ENCODE measurements at regions of chr13 and their contacts with region 1.

Region 1: GRCh38 chr13:112942689-112943308 is 26.2 kb upstream of the MCF2L start:
- DNase-seq: peak; percentile 98
- ATAC-seq: peak; percentile 98
- H3K4me3 Mint-ChIP-seq: peak overlapping the region; percentile 73
- H3K27ac Mint-ChIP-seq: peak overlapping the region; percentile 28
- H3K4me1 Mint-ChIP-seq: peaks cover 7% of the 10 kb centered on the region
- H3K27me3 Mint-ChIP-seq: peaks cover 18% of the 10 kb centered on the region

Region 2: DNA sequence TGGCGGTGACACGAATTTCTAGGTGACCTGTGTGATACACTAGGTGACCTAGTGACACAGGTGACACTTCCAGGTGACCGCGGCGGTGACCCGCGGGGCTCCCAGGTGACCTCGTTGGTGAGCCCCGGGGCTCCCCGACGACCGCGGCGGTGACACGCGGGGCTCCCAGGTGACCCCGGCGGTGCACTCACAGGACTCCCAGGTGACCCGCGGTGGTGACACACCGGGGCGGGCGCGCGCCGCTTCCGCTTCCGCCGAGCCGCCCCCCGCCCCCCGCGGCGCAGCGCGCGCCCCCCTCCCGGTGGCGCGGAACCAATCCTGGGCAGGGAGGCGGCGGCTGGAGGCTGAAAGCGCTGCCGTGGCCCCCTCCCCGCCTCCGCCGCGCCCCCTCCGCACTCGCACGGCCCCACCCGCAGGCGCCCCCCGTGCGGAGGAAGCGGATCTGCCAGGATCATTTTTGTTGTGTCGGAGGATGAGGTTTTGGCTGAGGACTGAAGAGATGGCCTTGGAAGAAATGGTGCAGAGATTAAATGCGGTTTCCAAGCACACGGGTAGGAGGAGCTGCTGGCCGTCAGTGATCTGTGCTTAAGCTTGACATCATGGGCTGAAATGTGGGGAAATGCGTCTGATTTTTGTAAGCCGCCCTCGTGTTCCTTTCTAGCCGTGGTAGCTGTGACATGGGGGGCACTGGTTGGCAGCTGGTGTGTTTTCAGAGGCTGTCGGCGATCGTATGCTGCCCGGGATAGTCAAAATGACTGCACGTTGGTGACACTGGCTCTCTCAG is 26.3 kb after region 1 on chr13 and contains the start of gene MCF2L:
- CTCF ChIA-PET with region 1: interaction called, 6 read pairs
- POLR2A ChIA-PET with region 1: no interaction called
- intact Hi-C with region 1: loop called (anchors 1 to 2 kb)
- DNase-seq: peak; percentile 82
- ATAC-seq: peak; percentile 82
- H3K4me3 Mint-ChIP-seq: peak within 1 kb of the TSS; percentile 93
- H3K27ac Mint-ChIP-seq: peak within 1 kb of the TSS; percentile 93
- H3K4me1 Mint-ChIP-seq: peaks cover 22% of the 10 kb centered on the region
- H3K27me3 Mint-ChIP-seq: no peaks in the 10 kb centered on the region
- total RNA-seq, gene MCF2L: 8.4 to 8.7 TPM

Region 3: GRCh38 chr13:113029487-113030258 is 86.9 kb after region 1 on chr13:
- CTCF ChIA-PET with region 1: interaction called, 26 read pairs
- POLR2A ChIA-PET with region 1: no interaction called
- intact Hi-C with region 1: loop called (anchors 1 kb)
- DNase-seq: peak; percentile 75
- ATAC-seq: peak; percentile 57
- H3K4me3 Mint-ChIP-seq: no peak overlapping the region
- H3K27ac Mint-ChIP-seq: no peak overlapping the region
- H3K4me1 Mint-ChIP-seq: no peaks in the 10 kb centered on the region
- H3K27me3 Mint-ChIP-seq: no peaks in the 10 kb centered on the region

Region 4: GRCh38 chr13:113153810-113154748 is 211.3 kb after region 1 on chr13:
- CTCF ChIA-PET with region 1: no interaction called
- POLR2A ChIA-PET with region 1: no interaction called
- intact Hi-C with region 1: loop called in 1 of 2 experiments (anchors 5 kb)
- DNase-seq: peak; percentile 80
- ATAC-seq: peak; percentile 72
- H3K4me3 Mint-ChIP-seq: peak overlapping the region; percentile 67
- H3K27ac Mint-ChIP-seq: no peak overlapping the region
- H3K4me1 Mint-ChIP-seq: peaks cover 17% of the 10 kb centered on the region
- H3K27me3 Mint-ChIP-seq: peaks cover 13% of the 10 kb centered on the region

Region 5: GRCh38 chr13:113393563-113394338 is 451.0 kb after region 1 on chr13:
- CTCF ChIA-PET with region 1: interaction called, 5 read pairs
- POLR2A ChIA-PET with region 1: no interaction called
- intact Hi-C with region 1: loop called (anchors 1 kb)
- DNase-seq: peak; percentile 92
- ATAC-seq: peak; percentile 94
- H3K4me3 Mint-ChIP-seq: peak overlapping the region; percentile 91
- H3K27ac Mint-ChIP-seq: peak overlapping the region; percentile 85
- H3K4me1 Mint-ChIP-seq: peaks cover 4% of the 10 kb centered on the region
- H3K27me3 Mint-ChIP-seq: no peaks in the 10 kb centered on the region

Region 6: DNA sequence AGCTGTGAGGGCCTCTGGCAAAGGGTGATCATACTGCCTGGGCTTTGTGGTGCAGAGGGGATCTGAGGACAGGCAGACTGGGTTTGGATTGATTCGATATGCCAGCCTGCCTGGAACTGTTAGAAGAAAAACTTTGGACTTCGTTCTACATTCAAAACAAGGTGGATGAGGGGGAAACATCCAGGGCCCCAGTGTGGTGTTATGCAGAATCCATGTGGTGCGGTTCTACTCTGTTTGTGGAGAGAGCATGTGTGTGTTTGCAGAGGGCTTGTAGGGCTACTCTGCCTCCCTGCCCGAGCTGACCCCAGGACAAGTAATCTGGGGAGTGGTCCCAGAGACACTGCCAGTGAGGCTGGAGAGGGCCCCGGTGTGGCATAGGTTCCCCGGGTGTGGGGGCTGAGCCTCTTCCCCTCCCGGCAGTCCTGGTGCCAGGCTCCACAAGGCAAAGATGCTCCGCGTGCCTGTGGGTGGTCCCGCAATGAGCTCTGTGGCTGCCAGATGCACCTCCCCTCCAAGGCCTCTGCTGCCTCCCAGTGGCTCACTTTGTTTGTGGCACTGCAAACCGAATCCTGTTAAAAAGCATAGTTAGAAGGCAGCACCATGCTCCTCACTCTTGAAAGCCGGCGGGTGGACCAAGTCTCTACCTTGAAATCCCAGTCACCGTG is 619.4 kb after region 1 on chr13:
- CTCF ChIA-PET with region 1: interaction called, 3 read pairs
- POLR2A ChIA-PET with region 1: no interaction called
- intact Hi-C with region 1: loop called in 1 of 2 experiments (anchors 2 kb)
- DNase-seq: peak; percentile 73
- ATAC-seq: peak; percentile 70
- H3K4me3 Mint-ChIP-seq: no peak overlapping the region
- H3K27ac Mint-ChIP-seq: no peak overlapping the region
- H3K4me1 Mint-ChIP-seq: peaks cover 2% of the 10 kb centered on the region
- H3K27me3 Mint-ChIP-seq: peaks cover 3% of the 10 kb centered on the region